IMR-90 (cell line): ENCODE measurements at regions of chrX and their contacts with region 1.

Region 1: DNA sequence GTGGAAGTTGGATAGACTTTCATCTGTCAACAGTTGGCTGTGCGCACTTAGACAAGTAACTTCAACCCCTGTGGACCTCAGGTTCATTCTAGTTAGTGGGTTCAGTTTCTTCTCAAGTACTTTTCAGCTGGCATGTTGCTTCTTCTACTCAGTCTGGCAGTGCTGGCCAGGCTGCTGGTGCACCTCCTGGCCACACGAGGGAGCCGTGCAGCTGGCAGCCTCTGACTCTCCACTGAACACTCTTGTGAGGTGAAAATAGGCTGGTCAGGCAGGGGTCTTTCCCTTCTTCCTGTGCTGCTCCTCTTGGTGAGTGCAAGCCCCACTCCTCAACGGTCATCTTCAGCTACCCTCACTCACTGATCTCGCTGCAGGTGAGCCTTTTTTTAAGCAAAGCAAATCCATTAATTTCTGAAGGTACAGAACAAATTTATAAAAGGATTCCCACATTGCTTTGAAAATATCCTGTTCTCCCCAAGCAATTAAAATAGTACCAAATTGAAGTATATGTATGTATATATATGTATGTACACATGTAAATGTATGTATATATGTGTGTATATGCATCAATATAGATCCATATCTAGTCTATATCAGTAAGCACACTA is 30.6 kb downstream of the LONRF3 start:
- DNase-seq: peak; percentile 28
- ATAC-seq: peak; percentile 87
- H3K4me3 ChIP-seq: no peak overlapping the region
- H3K27ac ChIP-seq: no peak overlapping the region
- H3K4me1 ChIP-seq: no peaks in the 10 kb centered on the region
- H3K27me3 ChIP-seq: peaks cover 8% of the 10 kb centered on the region
- CTCF ChIP-seq: peak; percentile 74
- POLR2A ChIP-seq: no peak
- RAD21 ChIP-seq: peak; percentile 58

Region 2: GRCh38 chrX:118474586-118474985 is 530.4 kb before region 1 on chrX:
- CTCF ChIA-PET with region 1: no interaction called
- POLR2A ChIA-PET with region 1: no interaction called
- dilution Hi-C with region 1: no loop called
- in situ Hi-C with region 1: no loop called
- intact Hi-C with region 1: no loop called
- DNase-seq: peak; percentile 24
- ATAC-seq: no peak
- H3K4me3 ChIP-seq: no peak overlapping the region
- H3K27ac ChIP-seq: no peak overlapping the region
- H3K4me1 ChIP-seq: no peaks in the 10 kb centered on the region
- H3K27me3 ChIP-seq: no peaks in the 10 kb centered on the region
- CTCF ChIP-seq: no peak
- POLR2A ChIP-seq: no peak
- RAD21 ChIP-seq: no peak

Region 3: DNA sequence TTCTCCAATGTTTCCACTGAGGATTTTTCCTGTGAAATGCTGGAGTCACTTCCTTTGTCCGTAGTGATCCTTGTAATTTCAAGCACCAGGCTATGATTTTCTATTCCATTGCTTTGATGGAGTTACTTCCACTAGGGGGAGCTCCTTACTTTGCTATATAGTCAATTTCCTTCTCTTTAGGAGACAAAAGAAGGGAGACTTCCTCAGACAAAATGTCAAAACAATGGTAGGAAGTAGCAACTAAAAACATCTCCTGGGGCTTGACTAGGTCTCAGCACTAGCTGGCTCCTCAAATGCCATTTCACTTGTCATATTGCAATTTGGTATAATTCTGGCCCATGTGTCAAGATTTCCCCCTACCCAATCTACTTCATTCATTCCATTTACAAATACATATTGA is 157.3 kb before region 1 on chrX:
- CTCF ChIA-PET with region 1: interaction called, 6 read pairs
- POLR2A ChIA-PET with region 1: no interaction called
- dilution Hi-C with region 1: no loop called
- in situ Hi-C with region 1: no loop called
- intact Hi-C with region 1: loop called (anchors 1 kb)
- DNase-seq: peak; percentile 42
- ATAC-seq: peak; percentile 75; the same call in 1 of the 2 replicates
- H3K4me3 ChIP-seq: no peak overlapping the region
- H3K27ac ChIP-seq: no peak overlapping the region
- H3K4me1 ChIP-seq: no peaks in the 10 kb centered on the region
- H3K27me3 ChIP-seq: peaks cover 7% of the 10 kb centered on the region
- CTCF ChIP-seq: peak; percentile 69
- POLR2A ChIP-seq: no peak
- RAD21 ChIP-seq: peak; percentile 58

Region 4: DNA sequence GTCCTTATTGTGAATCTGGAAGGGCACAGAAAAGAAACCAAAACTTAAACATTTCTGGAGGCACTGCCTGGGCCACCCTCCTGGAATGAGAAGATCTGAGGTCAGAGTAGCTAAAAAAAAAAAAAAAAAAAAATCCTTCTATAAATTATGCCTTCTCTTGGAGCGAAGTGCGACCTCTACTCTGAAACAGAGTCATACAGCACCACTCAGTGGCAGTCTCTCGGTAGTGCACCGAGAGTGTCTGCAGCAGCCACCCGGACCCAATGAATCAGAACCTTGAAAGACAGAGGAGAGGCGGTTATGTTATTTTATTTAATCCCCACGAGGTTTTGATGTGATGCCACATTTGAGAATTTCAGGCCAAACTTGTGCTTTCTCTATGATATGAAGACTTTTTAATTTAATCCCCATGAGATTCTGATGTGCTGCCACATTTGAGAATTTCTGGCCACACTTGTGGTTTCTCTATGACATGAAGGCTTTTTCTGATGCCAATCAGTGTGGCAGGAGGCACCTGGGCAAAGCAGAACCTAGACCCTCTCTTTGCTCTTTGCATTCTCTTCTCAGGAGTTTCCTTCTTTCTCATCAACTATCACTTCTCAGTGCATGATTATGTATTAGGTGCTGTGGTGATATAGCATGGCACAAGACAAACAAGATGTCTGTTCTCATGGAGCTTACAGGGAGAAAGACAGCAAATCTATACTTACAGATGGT is 62.2 kb after region 1 on chrX:
- CTCF ChIA-PET with region 1: interaction called, 4 read pairs
- POLR2A ChIA-PET with region 1: no interaction called
- dilution Hi-C with region 1: no loop called
- in situ Hi-C with region 1: no loop called
- intact Hi-C with region 1: loop called (anchors 1 kb)
- DNase-seq: peak; percentile 49
- ATAC-seq: peak; percentile 96
- H3K4me3 ChIP-seq: no peak overlapping the region
- H3K27ac ChIP-seq: no peak overlapping the region
- H3K4me1 ChIP-seq: no peaks in the 10 kb centered on the region
- H3K27me3 ChIP-seq: peaks cover 8% of the 10 kb centered on the region
- CTCF ChIP-seq: peak; percentile 70
- POLR2A ChIP-seq: no peak
- RAD21 ChIP-seq: peak; percentile 76

Region 5: GRCh38 chrX:119211649-119212014 is 206.6 kb after region 1 on chrX:
- CTCF ChIA-PET with region 1: interaction called, 4 read pairs
- POLR2A ChIA-PET with region 1: no interaction called
- dilution Hi-C with region 1: no loop called
- in situ Hi-C with region 1: no loop called
- intact Hi-C with region 1: loop called (anchors 10 kb)
- DNase-seq: no peak
- ATAC-seq: no peak
- H3K4me3 ChIP-seq: no peak overlapping the region
- H3K27ac ChIP-seq: no peak overlapping the region
- H3K4me1 ChIP-seq: no peaks in the 10 kb centered on the region
- H3K27me3 ChIP-seq: peaks cover 7% of the 10 kb centered on the region
- CTCF ChIP-seq: no peak
- POLR2A ChIP-seq: no peak
- RAD21 ChIP-seq: no peak

Region 6: DNA sequence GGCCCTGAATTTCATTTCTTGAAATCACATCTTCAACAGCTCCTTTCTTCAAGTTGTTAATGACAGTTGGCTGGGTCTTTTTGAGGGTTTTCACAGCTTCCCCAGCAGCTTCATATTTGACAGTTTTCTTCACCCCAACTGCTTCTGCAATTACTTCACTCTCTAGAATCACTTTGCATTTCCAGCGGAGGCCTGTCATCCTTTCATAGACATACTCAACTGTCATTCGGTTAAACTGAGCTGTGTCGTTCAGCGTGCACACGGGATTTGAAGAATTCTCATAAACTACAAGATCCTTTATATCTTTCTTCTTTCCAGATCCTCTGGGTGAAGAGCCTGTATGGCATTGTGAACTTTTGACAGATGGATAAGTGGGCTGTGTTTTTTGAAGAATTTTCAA is 584.8 kb after region 1 on chrX:
- CTCF ChIA-PET with region 1: no interaction called
- POLR2A ChIA-PET with region 1: no interaction called
- dilution Hi-C with region 1: no loop called
- in situ Hi-C with region 1: no loop called
- intact Hi-C with region 1: no loop called
- DNase-seq: no peak
- ATAC-seq: no peak
- H3K4me3 ChIP-seq: no peak overlapping the region
- H3K27ac ChIP-seq: no peak overlapping the region
- H3K4me1 ChIP-seq: no peaks in the 10 kb centered on the region
- H3K27me3 ChIP-seq: no peaks in the 10 kb centered on the region
- CTCF ChIP-seq: no peak
- POLR2A ChIP-seq: no peak
- RAD21 ChIP-seq: no peak